Activated CD8-positive, alpha-beta T cell treated with anti-CD3 and anti-CD28 coated beads for 36 hours (primary cell): ENCODE measurements at regions of chr14 and their contacts with region 1.

Region 1: DNA sequence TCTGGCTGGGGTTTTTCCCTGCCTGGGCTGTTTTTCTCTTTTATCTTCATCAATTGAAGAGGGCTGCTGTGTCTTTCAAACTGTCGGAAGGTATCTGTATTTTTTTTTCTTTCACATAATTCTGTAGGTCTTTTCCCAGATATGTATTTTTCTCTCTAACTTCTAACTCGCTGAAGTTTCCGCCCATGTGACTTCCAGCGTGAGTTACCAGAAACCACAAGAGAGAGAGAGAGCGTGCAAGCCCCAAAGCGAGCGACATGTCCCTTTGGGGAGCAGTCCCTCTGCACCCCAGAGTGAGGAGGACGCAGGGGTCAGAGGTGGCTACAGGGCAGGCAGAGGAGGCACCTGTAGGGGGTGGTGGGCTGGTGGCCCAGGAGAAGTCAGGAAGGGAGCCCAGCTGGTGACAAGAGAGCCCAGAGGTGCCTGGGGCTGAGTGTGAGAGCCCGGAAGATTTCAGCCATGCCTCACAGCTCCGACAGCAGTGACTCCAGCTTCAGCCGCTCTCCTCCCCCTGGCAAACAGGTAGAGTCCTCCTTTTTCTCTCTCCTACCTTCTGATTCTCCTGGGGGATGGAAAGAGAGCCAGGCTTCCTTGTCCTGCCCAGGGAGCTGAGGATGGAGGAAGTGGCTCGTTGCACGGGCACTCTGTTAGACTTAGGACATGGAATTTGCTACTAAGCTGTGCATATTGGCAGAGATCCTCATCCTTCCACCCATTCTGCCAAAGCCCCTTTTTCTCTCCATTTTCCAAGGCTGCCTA is at the start of gene BATF:
- DNase-seq: peak; percentile 84
- ATAC-seq: peak; percentile 64
- H3K4me3 Mint-ChIP-seq: peak within 1 kb of the TSS; percentile 90
- H3K27ac Mint-ChIP-seq: peak within 1 kb of the TSS; percentile 98
- H3K4me1 Mint-ChIP-seq: peaks cover 59% of the 10 kb centered on the region
- H3K27me3 Mint-ChIP-seq: no peaks in the 10 kb centered on the region
- CTCF ChIP-seq: no peak
- total RNA-seq, gene BATF: 46.4 to 47.0 TPM

Region 2: GRCh38 chr14:75497191-75497590 is 25.2 kb before region 1 on chr14:
- CTCF ChIA-PET with region 1: interaction called, 16 read pairs
- POLR2A ChIA-PET with region 1: interaction called, 11 read pairs
- intact Hi-C with region 1: no loop called
- DNase-seq: peak; percentile 75
- ATAC-seq: peak; percentile 83
- H3K4me3 Mint-ChIP-seq: peak overlapping the region; percentile 14
- H3K27ac Mint-ChIP-seq: peak overlapping the region; percentile 80
- H3K4me1 Mint-ChIP-seq: peaks cover 59% of the 10 kb centered on the region
- H3K27me3 Mint-ChIP-seq: no peaks in the 10 kb centered on the region
- CTCF ChIP-seq: no peak

Region 3: GRCh38 chr14:75542588-75543091 is 20.2 kb after region 1 on chr14:
- CTCF ChIA-PET with region 1: interaction called, 8 read pairs
- POLR2A ChIA-PET with region 1: interaction called, 117 read pairs
- intact Hi-C with region 1: loop called (anchors 2 kb)
- DNase-seq: peak; percentile 90
- ATAC-seq: peak; percentile 89
- H3K4me3 Mint-ChIP-seq: peak overlapping the region; percentile 54
- H3K27ac Mint-ChIP-seq: peak overlapping the region; percentile 96
- H3K4me1 Mint-ChIP-seq: peaks cover 57% of the 10 kb centered on the region
- H3K27me3 Mint-ChIP-seq: no peaks in the 10 kb centered on the region
- CTCF ChIP-seq: no peak

Region 4: GRCh38 chr14:75566321-75566720 is 43.9 kb after region 1 on chr14:
- CTCF ChIA-PET with region 1: interaction called, 87 read pairs
- POLR2A ChIA-PET with region 1: interaction called, 12 read pairs
- intact Hi-C with region 1: loop called (anchors 1 kb)
- DNase-seq: peak; percentile 96
- ATAC-seq: peak; percentile 82
- H3K4me3 Mint-ChIP-seq: peak overlapping the region; percentile 30
- H3K27ac Mint-ChIP-seq: peak overlapping the region; percentile 88
- H3K4me1 Mint-ChIP-seq: peaks cover 76% of the 10 kb centered on the region
- H3K27me3 Mint-ChIP-seq: no peaks in the 10 kb centered on the region
- CTCF ChIP-seq: no peak